Heart right ventricle (tissue), 16 donors: ENCODE measurements at regions of chr10 and their contacts with region 1.

Region 1: DNA sequence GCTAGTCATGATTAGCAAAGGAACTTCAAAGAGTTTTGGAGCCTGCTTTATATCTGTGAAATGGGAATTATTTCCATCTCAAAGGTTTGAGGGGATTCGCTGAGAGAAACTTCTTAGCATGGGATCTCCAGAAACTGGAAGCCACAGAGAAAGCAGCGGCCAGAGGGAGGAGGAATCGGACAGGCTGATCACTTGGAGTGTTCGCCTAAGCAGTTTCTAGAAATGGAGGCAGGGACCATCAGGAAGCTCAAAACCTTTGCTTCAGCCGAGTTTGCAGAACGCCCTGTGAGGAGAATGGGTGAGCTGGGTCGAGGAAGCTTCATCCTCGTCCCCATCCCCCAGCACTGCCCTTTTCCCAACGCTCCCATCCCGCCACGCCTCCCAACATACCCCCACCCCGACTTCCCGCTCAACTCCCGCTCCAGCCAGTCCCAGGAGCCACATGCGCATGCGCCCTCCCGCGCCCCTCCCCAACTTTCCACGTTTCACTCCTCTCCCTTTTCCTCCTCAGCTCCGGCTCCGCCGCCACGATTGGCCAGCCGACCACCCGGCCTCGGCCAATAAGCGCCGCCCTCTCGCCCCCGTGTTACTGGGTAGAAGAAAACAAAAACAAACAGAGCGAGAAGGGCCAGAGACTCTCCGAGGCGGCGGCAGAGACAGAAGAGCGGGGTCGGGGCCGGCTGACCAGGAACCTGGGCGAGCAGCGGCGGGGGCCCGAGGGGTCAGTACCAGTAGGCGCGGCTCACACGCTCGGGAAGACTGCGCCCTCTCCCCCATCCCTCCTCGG is at the start of gene PDCD4:
- DNase-seq: peak; percentile 100
- ATAC-seq: peak; percentile 95 to 98 (median 96)
- H3K4me3 ChIP-seq: peak within 1 kb of the TSS; percentile 83 to 99 (median 94)
- H3K27ac ChIP-seq: peak within 1 kb of the TSS; percentile 92 to 99 (median 97)
- H3K4me1 ChIP-seq: peaks cover 0 to 79% (median 24%) of the 10 kb centered on the region in 9 donors
- H3K27me3 ChIP-seq: no peaks in the 10 kb centered on the region
- CTCF ChIP-seq: no peak
- total RNA-seq, gene PDCD4: 35.2 to 57.6 (median 45.7) TPM

Region 2: GRCh38 chr10:110304780-110305421 is 566.6 kb before region 1 on chr10 and contains the start of gene SMNDC1:
- intact Hi-C with region 1: loop called in 1 of 10 experiments (anchors 5 kb)
- DNase-seq: peak; percentile 98
- ATAC-seq: peak; percentile 96 to 98 (median 98)
- H3K4me3 ChIP-seq: peak within 1 kb of the TSS; percentile 79 to 96 (median 86)
- H3K27ac ChIP-seq: peak within 1 kb of the TSS; percentile 83 to 95 (median 92)
- H3K4me1 ChIP-seq: peaks cover 4 to 68% (median 52%) of the 10 kb centered on the region in 9 donors
- H3K27me3 ChIP-seq: no peaks in the 10 kb centered on the region
- CTCF ChIP-seq: no peak
- total RNA-seq, gene SMNDC1: 18.1 to 28.0 (median 22.4) TPM

Region 3: GRCh38 chr10:110746254-110746826 is 125.2 kb before region 1 on chr10:
- intact Hi-C with region 1: loop called in 5 of 10 experiments (anchors 5 kb)
- DNase-seq: peak in 1 of 2 donors; percentile 66
- ATAC-seq: peak; percentile 37 to 76 (median 67)
- H3K4me3 ChIP-seq: no peak overlapping the region
- H3K27ac ChIP-seq: peak overlapping the region in 8 of 10 donors; percentile 6 to 86 (median 52)
- H3K4me1 ChIP-seq: peaks cover 8 to 76% (median 39%) of the 10 kb centered on the region in 9 donors
- H3K27me3 ChIP-seq: no peaks in the 10 kb centered on the region
- CTCF ChIP-seq: peak; percentile 57 to 89 (median 81)

Region 4: GRCh38 chr10:110820321-110820814 is 51.1 kb before region 1 on chr10:
- intact Hi-C with region 1: loop called in 5 of 10 experiments (anchors 5 to 10 kb)
- DNase-seq: peak; percentile 52 to 78
- ATAC-seq: peak; percentile 52 to 77 (median 70)
- H3K4me3 ChIP-seq: no peak overlapping the region
- H3K27ac ChIP-seq: peak overlapping the region; percentile 40 to 90 (median 80)
- H3K4me1 ChIP-seq: peaks cover 36 to 95% (median 78%) of the 10 kb centered on the region in 9 donors
- H3K27me3 ChIP-seq: no peaks in the 10 kb centered on the region
- CTCF ChIP-seq: no peak

Region 5: GRCh38 chr10:110834629-110835301 is 36.7 kb before region 1 on chr10:
- intact Hi-C with region 1: loop called in 3 of 10 experiments (anchors 5 to 10 kb)
- DNase-seq: peak; percentile 34 to 64
- ATAC-seq: peak; percentile 69 to 87 (median 74)
- H3K4me3 ChIP-seq: no peak overlapping the region
- H3K27ac ChIP-seq: peak overlapping the region; percentile 18 to 92 (median 70)
- H3K4me1 ChIP-seq: peaks cover 22 to 82% (median 51%) of the 10 kb centered on the region in 9 donors
- H3K27me3 ChIP-seq: no peaks in the 10 kb centered on the region
- CTCF ChIP-seq: no peak

Region 6: GRCh38 chr10:110918643-110919363 is 47.3 kb after region 1 on chr10 and contains the start of gene BBIP1:
- intact Hi-C with region 1: loop called in 1 of 10 experiments (anchors 2 kb)
- DNase-seq: no peak
- ATAC-seq: peak; percentile 95 to 98 (median 96)
- H3K4me3 ChIP-seq: peak within 1 kb of the TSS; percentile 59 to 79 (median 70)
- H3K27ac ChIP-seq: peak within 1 kb of the TSS; percentile 93 to 99 (median 97)
- H3K4me1 ChIP-seq: peaks cover 7 to 54% (median 40%) of the 10 kb centered on the region in 9 donors
- H3K27me3 ChIP-seq: no peaks in the 10 kb centered on the region
- CTCF ChIP-seq: peak in 2 of 9 donors; percentile 1 to 27
- total RNA-seq, gene BBIP1: 16.6 to 30.7 (median 23.8) TPM